SK-N-SH (cell line): ENCODE measurements at regions of chr11 and their contacts with region 1.

Region 1: DNA sequence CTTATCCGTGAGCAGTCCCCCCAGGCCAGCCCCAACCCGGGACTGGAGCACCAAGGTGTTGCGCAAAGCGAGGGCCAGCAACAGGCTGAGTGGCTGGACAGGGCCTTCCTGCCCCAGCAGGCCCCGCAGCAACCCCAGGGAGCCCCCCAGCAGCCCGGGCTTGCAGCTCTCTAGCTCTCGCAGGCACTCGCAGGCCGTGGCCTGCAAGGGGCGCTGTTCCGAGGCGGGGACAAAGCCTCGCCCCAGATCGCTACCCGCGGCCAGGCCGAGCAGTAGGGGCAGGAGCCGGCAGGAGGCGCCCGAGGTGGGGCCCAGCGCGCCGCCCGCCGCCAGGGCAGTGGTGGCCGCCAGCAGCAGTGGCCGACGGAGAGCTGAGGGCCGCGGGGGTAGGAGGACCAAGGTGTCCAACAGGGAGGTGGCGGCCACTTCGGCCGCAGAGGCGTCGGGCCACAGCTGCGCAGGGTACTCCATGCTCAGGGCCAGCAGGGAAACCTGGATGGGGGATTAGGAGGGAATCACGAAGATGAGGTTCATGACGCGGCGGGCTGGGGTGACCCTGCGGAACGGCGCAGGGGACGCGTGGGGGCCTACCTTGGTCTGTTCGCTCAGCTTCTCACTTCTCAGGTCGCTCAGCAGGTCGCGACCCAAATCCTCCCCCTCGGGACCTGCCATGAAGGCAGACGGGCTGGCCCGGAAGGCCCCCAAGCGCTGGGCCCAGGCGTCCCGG is 762 bp downstream of the AP5B1 start:
- DNase-seq: peak; percentile 87
- H3K4me3 ChIP-seq: peak overlapping the region; percentile 62 to 70
- H3K27ac ChIP-seq: peak overlapping the region in 1 of 2 experiments; percentile 35; a peak in 2 of 4 replicates
- H3K4me1 ChIP-seq: peaks cover 0 to 13% of the 10 kb centered on the region in 2 experiments; a peak in 1 of 4 replicates
- H3K27me3 ChIP-seq: no peaks in the 10 kb centered on the region
- CTCF ChIP-seq: peak; percentile 71
- EP300 ChIP-seq: no peak
- RAD21 ChIP-seq: peak; percentile 12; the same call in 1 of the 2 replicates

Region 2: GRCh38 chr11:65720237-65720934 is 59.6 kb before region 1 on chr11 and contains the start of gene RNASEH2C:
- CTCF ChIA-PET with region 1: interaction called, 16 read pairs
- POLR2A ChIA-PET with region 1: interaction called, 6 read pairs
- DNase-seq: peak; percentile 93
- H3K4me3 ChIP-seq: peak within 1 kb of the TSS; percentile 76 to 85
- H3K27ac ChIP-seq: peak within 1 kb of the TSS; percentile 48 to 94; a peak in 3 of 4 replicates
- H3K4me1 ChIP-seq: peaks cover 7 to 19% of the 10 kb centered on the region in 2 experiments; a peak in 1 of 4 replicates
- H3K27me3 ChIP-seq: no peaks in the 10 kb centered on the region
- CTCF ChIP-seq: no peak
- EP300 ChIP-seq: no peak
- RAD21 ChIP-seq: no peak
- polyA plus RNA-seq, gene RNASEH2C: 43.9 and 50.9 TPM in 2 replicates

Region 3: GRCh38 chr11:65736810-65737209 is 43.2 kb before region 1 on chr11:
- CTCF ChIA-PET with region 1: interaction called, 14 read pairs
- POLR2A ChIA-PET with region 1: no interaction called
- DNase-seq: no peak
- H3K4me3 ChIP-seq: no peak overlapping the region
- H3K27ac ChIP-seq: no peak overlapping the region
- H3K4me1 ChIP-seq: no peaks in the 10 kb centered on the region
- H3K27me3 ChIP-seq: peaks cover 5% of the 10 kb centered on the region; the same call in 1 of the 2 replicates
- CTCF ChIP-seq: no peak
- EP300 ChIP-seq: no peak
- RAD21 ChIP-seq: no peak

Region 4: GRCh38 chr11:65766535-65766934 is 13.5 kb before region 1 on chr11:
- CTCF ChIA-PET with region 1: interaction called, 50 read pairs
- POLR2A ChIA-PET with region 1: no interaction called
- DNase-seq: no peak
- H3K4me3 ChIP-seq: no peak overlapping the region
- H3K27ac ChIP-seq: no peak overlapping the region
- H3K4me1 ChIP-seq: no peaks in the 10 kb centered on the region
- H3K27me3 ChIP-seq: no peaks in the 10 kb centered on the region
- CTCF ChIP-seq: no peak
- EP300 ChIP-seq: no peak
- RAD21 ChIP-seq: no peak

Region 5: DNA sequence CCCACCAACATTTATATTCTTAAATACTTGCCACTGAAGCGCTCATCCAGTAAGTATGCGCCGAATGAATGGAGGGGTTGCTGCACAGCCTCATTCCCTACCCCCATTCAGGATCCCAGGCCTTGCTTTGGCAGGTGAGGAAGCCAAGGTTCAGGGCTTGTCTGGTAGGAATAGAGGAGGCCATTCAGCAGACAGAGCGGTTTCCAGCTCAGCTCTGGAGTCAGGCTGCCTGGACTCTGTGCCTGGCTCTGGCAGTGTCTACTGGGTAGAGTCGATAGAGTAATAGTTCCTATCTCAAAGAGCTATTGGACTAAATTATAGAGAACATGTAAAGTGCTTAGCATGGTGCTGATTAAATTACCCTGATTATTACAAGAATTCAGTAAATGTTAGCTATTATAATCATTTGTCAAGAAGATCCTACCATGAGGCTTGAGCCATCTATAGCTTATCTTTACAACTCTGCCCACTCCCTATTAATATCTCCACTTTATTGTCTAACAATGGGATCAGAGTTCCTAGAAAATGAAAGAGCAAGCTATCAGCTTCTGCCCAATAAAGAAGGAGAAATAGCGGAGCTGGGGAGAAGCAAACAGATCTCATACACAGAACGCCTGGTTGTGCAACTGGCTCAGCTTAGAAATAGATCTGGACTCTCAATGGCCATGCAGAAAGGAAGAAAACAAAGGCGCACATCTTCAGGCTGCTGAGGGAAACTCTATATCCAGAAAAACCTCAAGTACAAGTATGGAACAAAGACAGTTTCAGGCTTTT is 47.1 kb after region 1 on chr11:
- CTCF ChIA-PET with region 1: interaction called, 10 read pairs
- POLR2A ChIA-PET with region 1: no interaction called
- DNase-seq: no peak
- H3K4me3 ChIP-seq: no peak overlapping the region
- H3K27ac ChIP-seq: no peak overlapping the region
- H3K4me1 ChIP-seq: no peaks in the 10 kb centered on the region; a peak in 1 of 4 replicates
- H3K27me3 ChIP-seq: no peaks in the 10 kb centered on the region
- CTCF ChIP-seq: no peak
- EP300 ChIP-seq: no peak
- RAD21 ChIP-seq: no peak

Region 6: DNA sequence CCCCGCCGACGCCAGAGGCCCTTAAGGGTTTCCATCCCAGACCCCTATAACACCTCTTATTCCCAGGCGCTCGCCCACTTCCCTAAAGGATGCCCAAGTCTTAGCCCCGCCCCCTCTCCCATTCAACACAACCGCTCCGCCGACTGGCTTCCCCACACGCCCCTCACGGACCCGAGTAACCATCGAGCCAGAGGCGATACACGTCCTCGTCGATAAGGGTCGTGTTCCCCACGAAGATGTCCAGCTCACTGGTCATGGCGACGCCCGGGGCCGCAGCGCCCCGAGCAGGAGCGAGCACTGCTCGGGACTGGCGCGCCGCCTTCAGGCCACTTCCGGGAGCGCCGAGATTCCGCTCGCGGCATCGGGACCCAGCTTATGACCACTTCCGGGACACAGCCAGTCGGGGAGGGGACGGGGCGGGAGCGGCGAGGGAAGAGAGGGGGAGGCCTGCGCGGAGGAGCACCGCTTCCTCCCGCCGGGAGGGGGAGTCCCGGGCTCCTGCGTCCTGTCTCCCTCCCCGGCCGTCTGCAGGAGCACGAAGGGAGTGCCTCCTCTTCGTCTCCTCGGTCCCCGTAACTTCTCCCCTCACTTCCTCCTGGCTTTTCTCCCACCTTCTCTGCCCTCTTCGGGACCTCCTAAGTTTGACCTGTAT is 108.3 kb after region 1 on chr11 and contains the start of gene FIBP:
- CTCF ChIA-PET with region 1: interaction called, 10 read pairs
- POLR2A ChIA-PET with region 1: no interaction called
- DNase-seq: peak; percentile 97
- H3K4me3 ChIP-seq: peak within 1 kb of the TSS; percentile 56 to 82
- H3K27ac ChIP-seq: peak within 1 kb of the TSS; percentile 94 to 99
- H3K4me1 ChIP-seq: peaks cover 41 to 52% of the 10 kb centered on the region in 2 experiments
- H3K27me3 ChIP-seq: no peaks in the 10 kb centered on the region
- CTCF ChIP-seq: peak; percentile 68
- EP300 ChIP-seq: no peak
- RAD21 ChIP-seq: peak; percentile 24
- polyA plus RNA-seq, gene FIBP: 159 and 190 TPM in 2 replicates